ENCODE measurements at regions of chr9 and their contacts with region 1.

Region 1: DNA sequence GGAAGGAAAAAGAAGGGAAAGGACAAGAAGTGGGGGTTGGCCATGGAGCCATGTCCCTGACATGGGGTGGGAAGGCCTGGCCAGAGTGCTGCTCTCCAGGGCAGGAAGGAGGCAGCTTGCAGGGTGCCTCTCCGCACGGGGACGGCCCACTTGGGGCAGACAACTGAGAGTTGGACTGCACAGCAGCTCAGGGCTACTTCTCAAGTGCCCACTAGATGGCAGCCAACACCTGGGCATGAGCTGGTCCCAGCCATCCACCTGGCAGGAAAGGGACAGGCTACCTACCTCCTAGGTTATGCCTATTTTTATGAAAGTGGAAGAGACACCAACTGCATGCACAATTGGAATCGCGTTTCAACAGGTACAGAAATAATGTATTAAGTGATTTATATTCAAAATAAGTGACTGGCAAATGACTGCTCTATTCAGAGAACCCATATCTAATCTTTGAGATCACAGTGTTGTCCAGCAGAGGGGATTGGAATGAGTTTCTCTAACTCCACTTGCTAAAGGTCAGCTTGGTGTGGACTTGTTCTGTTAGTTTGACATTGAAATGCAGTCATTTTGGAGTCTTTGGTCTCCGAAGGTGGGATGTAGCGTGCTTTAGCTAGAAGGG is 113.4 kb downstream of the SYK start:
- DNase-seq: peak; percentile 89
- CTCF ChIP-seq: peak; percentile 79

Region 2: DNA sequence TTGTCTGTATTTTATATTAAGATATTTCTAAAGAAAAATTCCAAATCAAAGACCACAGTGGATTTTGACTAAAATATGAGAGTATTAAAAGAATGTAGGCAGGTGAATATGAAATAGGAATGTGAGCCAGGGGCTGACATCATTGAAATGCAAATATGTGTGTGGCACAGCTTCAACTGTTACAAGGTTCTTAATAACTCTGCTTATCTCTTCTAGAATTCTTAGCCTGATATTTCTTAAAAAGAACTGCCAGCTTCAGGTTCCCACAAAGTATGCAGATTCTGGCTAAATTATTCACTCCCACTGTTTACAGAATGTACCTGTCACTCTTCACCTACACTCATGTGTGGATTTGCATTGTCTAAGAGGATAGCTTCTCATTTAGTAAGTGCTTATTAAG is 546.7 kb before region 1 on chr9:
- in situ Hi-C with region 1: no loop called
- DNase-seq: no peak
- CTCF ChIP-seq: no peak

Region 3: DNA sequence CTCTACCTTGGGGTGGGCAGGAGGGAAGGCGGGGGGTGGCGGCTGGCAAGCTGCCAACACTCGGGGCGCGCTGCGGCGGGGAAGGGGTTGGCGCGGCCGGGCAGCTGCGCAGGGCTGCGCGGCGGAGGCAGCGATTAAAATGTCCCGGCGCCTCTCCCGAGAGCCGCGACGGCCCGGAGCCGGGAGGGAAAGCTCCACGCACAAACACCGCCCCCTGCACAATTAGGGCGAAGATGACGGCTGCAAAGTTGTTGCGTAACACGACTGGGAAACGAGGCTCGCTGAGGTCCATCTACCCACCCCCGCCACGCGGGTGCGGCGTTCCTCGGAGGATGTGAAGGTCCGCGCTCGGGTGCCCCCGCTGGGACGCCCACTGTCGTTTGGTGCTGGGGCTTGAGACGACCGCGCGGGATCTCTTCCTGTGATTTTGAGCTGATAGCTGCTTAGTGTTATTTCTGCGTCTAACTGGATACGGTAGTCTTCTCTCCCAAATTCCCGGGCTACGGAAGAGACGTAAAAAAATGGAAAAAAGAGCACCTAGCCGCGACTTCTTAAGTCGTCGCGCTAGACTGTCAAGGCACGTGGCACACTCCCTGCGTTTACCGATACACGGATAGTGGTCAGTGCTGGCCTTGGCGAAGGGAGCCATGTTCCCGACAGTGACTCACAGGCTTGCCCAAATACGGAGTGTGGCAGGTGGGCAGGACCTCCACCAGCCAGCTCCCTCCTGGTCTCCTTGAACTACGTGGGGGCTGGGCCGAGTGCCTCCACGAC is 509.6 kb after region 1 on chr9:
- in situ Hi-C with region 1: loop called (anchors 5 kb)
- DNase-seq: peak; percentile 38
- CTCF ChIP-seq: no peak

Region 4: GRCh38 chr9:91681461-91682305 is 766.7 kb after region 1 on chr9:
- in situ Hi-C with region 1: loop called (anchors 25 kb)
- DNase-seq: peak; percentile 85
- CTCF ChIP-seq: peak; percentile 96

Measured in GM13977 (cell line).